HCT116 (cell line): ENCODE measurements at regions of chr19 and their contacts with region 1.

Region 1: DNA sequence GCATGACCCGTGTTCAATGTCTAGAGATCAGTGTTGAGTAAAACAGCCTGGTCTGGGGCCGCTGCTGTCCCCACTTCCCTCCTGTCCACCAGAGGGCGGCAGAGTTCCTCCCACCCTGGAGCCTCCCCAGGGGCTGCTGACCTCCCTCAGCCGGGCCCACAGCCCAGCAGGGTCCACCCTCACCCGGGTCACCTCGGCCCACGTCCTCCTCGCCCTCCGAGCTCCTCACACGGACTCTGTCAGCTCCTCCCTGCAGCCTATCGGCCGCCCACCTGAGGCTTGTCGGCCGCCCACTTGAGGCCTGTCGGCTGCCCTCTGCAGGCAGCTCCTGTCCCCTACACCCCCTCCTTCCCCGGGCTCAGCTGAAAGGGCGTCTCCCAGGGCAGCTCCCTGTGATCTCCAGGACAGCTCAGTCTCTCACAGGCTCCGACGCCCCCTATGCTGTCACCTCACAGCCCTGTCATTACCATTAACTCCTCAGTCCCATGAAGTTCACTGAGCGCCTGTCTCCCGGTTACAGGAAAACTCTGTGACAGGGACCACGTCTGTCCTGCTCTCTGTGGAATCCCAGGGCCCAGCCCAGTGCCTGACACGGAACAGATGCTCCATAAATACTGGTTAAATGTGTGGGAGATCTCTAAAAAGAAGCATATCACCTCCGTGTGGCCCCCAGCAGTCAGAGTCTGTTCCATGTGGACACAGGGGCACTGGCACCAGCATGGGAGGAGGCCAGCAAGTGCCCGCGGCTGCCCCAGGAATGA is 1.5 kb upstream of the CEACAM5 start:
- DNase-seq: peak; percentile 69
- ATAC-seq: peak; percentile 97
- H3K4me3 ChIP-seq: peak overlapping the region in 1 of 2 experiments; percentile 18; a peak in 1 of 4 replicates
- H3K27ac ChIP-seq: no peak overlapping the region
- H3K4me1 ChIP-seq: peaks cover 0 to 9% of the 10 kb centered on the region in 2 experiments; a peak in 2 of 4 replicates
- H3K27me3 ChIP-seq: peaks cover 47% of the 10 kb centered on the region
- CTCF ChIP-seq: peak; percentile 92 to 100 (median 100)
- POLR2A ChIP-seq: no peak
- RAD21 ChIP-seq: peak; percentile 63

Region 2: DNA sequence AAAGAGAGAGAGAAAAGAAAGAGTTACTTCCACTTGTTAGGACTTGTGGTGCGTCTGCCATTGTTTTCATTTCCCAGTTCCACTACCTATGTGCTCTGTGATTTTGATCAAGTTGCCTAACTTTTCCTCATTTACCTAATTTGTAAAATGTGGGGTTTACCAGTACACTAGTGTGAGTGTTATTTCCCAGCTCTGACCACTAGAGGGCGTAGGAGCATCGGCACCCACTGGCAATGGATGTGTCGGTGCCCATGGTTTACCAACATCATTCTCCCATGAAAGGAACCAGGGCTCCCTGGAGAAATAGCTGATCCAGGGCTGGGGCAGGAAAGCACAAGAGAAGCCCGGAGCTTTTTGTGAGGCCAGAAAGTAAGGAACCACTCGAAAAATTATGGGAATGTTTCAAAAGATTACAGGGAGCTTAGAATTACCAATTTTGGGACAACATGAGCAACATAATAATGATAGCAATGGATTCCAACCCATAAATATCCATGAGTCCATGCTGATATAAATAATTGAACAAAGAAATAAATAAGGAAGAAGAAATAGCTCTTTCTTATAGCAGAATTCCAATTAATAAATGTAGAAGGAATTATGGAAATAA is 64.9 kb before region 1 on chr19:
- CTCF ChIA-PET with region 1: interaction called, 20 read pairs
- POLR2A ChIA-PET with region 1: no interaction called
- RAD21 ChIA-PET with region 1: no interaction called
- intact Hi-C with region 1: no loop called
- DNase-seq: peak; percentile 37
- ATAC-seq: peak; percentile 94
- H3K4me3 ChIP-seq: no peak overlapping the region
- H3K27ac ChIP-seq: no peak overlapping the region
- H3K4me1 ChIP-seq: no peaks in the 10 kb centered on the region
- H3K27me3 ChIP-seq: peaks cover 38% of the 10 kb centered on the region
- CTCF ChIP-seq: peak; percentile 84 to 98 (median 87)
- POLR2A ChIP-seq: no peak
- RAD21 ChIP-seq: peak; percentile 75

Region 3: DNA sequence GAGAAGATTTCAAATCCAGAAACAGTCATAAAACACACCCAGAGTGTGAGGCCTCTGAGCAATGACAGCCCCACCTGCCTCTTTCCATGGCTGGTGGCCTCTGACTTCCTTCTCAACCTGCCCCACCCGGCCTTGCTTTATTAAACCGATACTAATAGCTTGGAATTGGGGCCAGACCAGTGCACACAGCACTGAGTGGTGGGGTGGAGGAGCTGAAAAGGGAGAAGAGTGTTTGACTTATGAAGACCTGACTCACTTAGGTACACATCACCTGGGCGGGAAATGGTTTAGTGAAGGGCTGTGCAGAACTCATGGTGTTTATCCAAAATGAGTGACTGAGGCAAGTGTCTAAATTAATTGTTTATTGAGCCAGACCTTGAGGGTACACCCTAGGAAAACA is 27.7 kb after region 1 on chr19:
- CTCF ChIA-PET with region 1: interaction called, 10 read pairs
- POLR2A ChIA-PET with region 1: no interaction called
- RAD21 ChIA-PET with region 1: no interaction called
- intact Hi-C with region 1: no loop called
- DNase-seq: no peak
- ATAC-seq: no peak
- H3K4me3 ChIP-seq: no peak overlapping the region
- H3K27ac ChIP-seq: no peak overlapping the region
- H3K4me1 ChIP-seq: no peaks in the 10 kb centered on the region
- H3K27me3 ChIP-seq: peaks cover 61% of the 10 kb centered on the region
- CTCF ChIP-seq: no peak
- POLR2A ChIP-seq: no peak
- RAD21 ChIP-seq: no peak

Region 4: GRCh38 chr19:41753936-41754529 is 47.1 kb after region 1 on chr19:
- CTCF ChIA-PET with region 1: interaction called, 32 read pairs
- POLR2A ChIA-PET with region 1: no interaction called
- RAD21 ChIA-PET with region 1: no interaction called
- intact Hi-C with region 1: no loop called
- DNase-seq: peak; percentile 39
- ATAC-seq: peak; percentile 92
- H3K4me3 ChIP-seq: no peak overlapping the region
- H3K27ac ChIP-seq: no peak overlapping the region
- H3K4me1 ChIP-seq: peaks cover 0 to 7% of the 10 kb centered on the region in 2 experiments; a peak in 1 of 4 replicates
- H3K27me3 ChIP-seq: peaks cover 56% of the 10 kb centered on the region
- CTCF ChIP-seq: peak; percentile 50 to 86 (median 85)
- POLR2A ChIP-seq: no peak
- RAD21 ChIP-seq: no peak

Region 5: GRCh38 chr19:41795031-41795461 is 88.1 kb after region 1 on chr19:
- CTCF ChIA-PET with region 1: interaction called, 13 read pairs
- POLR2A ChIA-PET with region 1: no interaction called
- RAD21 ChIA-PET with region 1: no interaction called
- intact Hi-C with region 1: no loop called
- DNase-seq: peak; percentile 38
- ATAC-seq: peak; percentile 93
- H3K4me3 ChIP-seq: no peak overlapping the region
- H3K27ac ChIP-seq: no peak overlapping the region
- H3K4me1 ChIP-seq: no peaks in the 10 kb centered on the region; a peak in 1 of 4 replicates
- H3K27me3 ChIP-seq: peaks cover 22% of the 10 kb centered on the region; the same call in 1 of the 2 replicates
- CTCF ChIP-seq: peak; percentile 54 to 89 (median 83)
- POLR2A ChIP-seq: no peak
- RAD21 ChIP-seq: peak; percentile 41

Region 6: GRCh38 chr19:41959056-41960053 is 252.4 kb after region 1 on chr19 and contains the start of gene RABAC1:
- CTCF ChIA-PET with region 1: no interaction called
- POLR2A ChIA-PET with region 1: no interaction called
- RAD21 ChIA-PET with region 1: no interaction called
- intact Hi-C with region 1: loop called (anchors 10 kb)
- DNase-seq: peak; percentile 85
- ATAC-seq: peak; percentile 79
- H3K4me3 ChIP-seq: peak within 1 kb of the TSS; percentile 82 to 87
- H3K27ac ChIP-seq: peak within 1 kb of the TSS; percentile 72
- H3K4me1 ChIP-seq: peaks cover 24 to 38% of the 10 kb centered on the region in 2 experiments
- H3K27me3 ChIP-seq: no peaks in the 10 kb centered on the region
- CTCF ChIP-seq: peak in 2 of 3 experiments; percentile 34 to 37; a peak in 2 of 6 replicates
- POLR2A ChIP-seq: peak; percentile 37
- RAD21 ChIP-seq: no peak
- total RNA-seq, gene RABAC1: 66.3 TPM